ENCODE measurements at regions of chr5 and their contacts with region 1.

Region 1: GRCh38 chr5:163867324-163867723 is 361.9 kb downstream of the MAT2B start:
- DNase-seq: no peak
- ATAC-seq: no peak
- H3K4me3 ChIP-seq: no peak overlapping the region
- H3K4me3 Mint-ChIP-seq: no peak overlapping the region
- H3K27ac ChIP-seq: no peak overlapping the region
- H3K27ac Mint-ChIP-seq: no peak overlapping the region
- H3K4me1 ChIP-seq: no peaks in the 10 kb centered on the region
- H3K4me1 Mint-ChIP-seq: no peaks in the 10 kb centered on the region
- H3K27me3 ChIP-seq: no peaks in the 10 kb centered on the region
- H3K27me3 Mint-ChIP-seq: no peaks in the 10 kb centered on the region

Region 2: GRCh38 chr5:163269624-163270023 is 597.7 kb before region 1 on chr5:
- CTCF ChIA-PET with region 1: no interaction called
- POLR2A ChIA-PET with region 1: no interaction called
- intact Hi-C with region 1: loop called in 1 of 2 experiments (anchors 5 kb)
- DNase-seq: no peak
- ATAC-seq: no peak
- H3K4me3 ChIP-seq: no peak overlapping the region
- H3K4me3 Mint-ChIP-seq: no peak overlapping the region
- H3K27ac ChIP-seq: no peak overlapping the region
- H3K27ac Mint-ChIP-seq: no peak overlapping the region
- H3K4me1 ChIP-seq: no peaks in the 10 kb centered on the region
- H3K4me1 Mint-ChIP-seq: no peaks in the 10 kb centered on the region
- H3K27me3 ChIP-seq: no peaks in the 10 kb centered on the region
- H3K27me3 Mint-ChIP-seq: peaks cover 0 to 6% (median 4%) of the 10 kb centered on the region in 5 donors

Region 3: DNA sequence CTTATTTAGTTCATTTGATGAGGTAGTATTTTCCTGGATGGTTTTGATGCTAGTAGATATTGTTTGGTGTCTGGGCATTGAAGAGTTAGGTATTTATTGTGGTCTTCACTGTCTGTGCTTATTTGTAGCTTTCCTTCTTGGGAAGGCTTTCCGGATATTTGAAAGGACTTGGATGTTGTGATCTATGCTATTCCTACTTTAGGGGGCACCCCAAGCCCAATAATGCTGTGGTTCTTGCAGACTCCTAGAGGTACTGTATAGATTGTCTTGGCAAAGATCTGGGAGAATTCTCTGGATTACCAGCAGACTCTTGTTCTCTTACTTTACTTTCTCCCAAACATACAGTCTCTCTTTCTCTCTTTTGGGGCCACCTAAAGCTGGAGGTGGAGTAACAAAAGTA is 46.2 kb before region 1 on chr5:
- CTCF ChIA-PET with region 1: no interaction called
- POLR2A ChIA-PET with region 1: no interaction called
- intact Hi-C with region 1: no loop called
- DNase-seq: no peak
- ATAC-seq: no peak
- H3K4me3 ChIP-seq: no peak overlapping the region
- H3K4me3 Mint-ChIP-seq: no peak overlapping the region
- H3K27ac ChIP-seq: no peak overlapping the region
- H3K27ac Mint-ChIP-seq: no peak overlapping the region
- H3K4me1 ChIP-seq: no peaks in the 10 kb centered on the region
- H3K4me1 Mint-ChIP-seq: no peaks in the 10 kb centered on the region
- H3K27me3 ChIP-seq: no peaks in the 10 kb centered on the region
- H3K27me3 Mint-ChIP-seq: no peaks in the 10 kb centered on the region

Measured in naive thymus-derived CD4-positive, alpha-beta T cell (primary cell).